K562 (cell line): ENCODE measurements at regions of chrX and their contacts with region 1.

Region 1: GRCh38 chrX:70998411-70999027 is 67.6 kb upstream of the SLC7A3 start:
- DNase-seq: peak in 1 of 4 experiments; percentile 67
- ATAC-seq: peak; percentile 84
- H3K4me3 ChIP-seq: no peak overlapping the region
- H3K27ac ChIP-seq: no peak overlapping the region
- H3K4me1 ChIP-seq: peaks cover 0 to 7% of the 10 kb centered on the region in 2 experiments; a peak in 2 of 5 replicates
- H3K27me3 ChIP-seq: no peaks in the 10 kb centered on the region
- CTCF ChIP-seq: peak; percentile 58 to 63 (median 62)
- EP300 ChIP-seq: no peak
- POLR2A ChIP-seq: no peak
- RAD21 ChIP-seq: peak; percentile 60 to 83

Region 2: DNA sequence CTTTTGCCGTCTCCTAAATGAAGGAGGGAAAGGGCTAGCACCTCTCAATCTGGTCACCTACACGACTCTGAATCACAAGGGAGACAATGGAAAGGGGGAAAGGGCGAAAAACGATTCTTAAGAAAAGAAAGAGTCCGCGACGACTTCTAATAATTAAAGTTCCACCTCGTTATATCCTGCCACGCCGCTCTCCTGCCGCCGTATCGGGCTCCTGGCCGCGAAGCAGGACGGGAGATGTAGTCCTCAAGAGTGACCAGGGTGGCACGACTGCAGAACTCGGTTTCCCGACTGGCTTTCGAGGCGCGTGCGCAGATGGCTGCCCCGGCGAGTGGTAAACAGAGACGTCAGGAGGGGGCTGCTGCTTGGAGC is 97.0 kb after region 1 on chrX and contains the start of gene FOXO4:
- CTCF ChIA-PET with region 1: no interaction called
- POLR2A ChIA-PET with region 1: no interaction called
- in situ Hi-C with region 1: no loop called
- intact Hi-C with region 1: loop called (anchors 1 kb)
- DNase-seq: peak in 2 of 4 experiments; percentile 89 to 93
- ATAC-seq: peak; percentile 90
- H3K4me3 ChIP-seq: peak within 1 kb of the TSS; percentile 59
- H3K27ac ChIP-seq: peak within 1 kb of the TSS; percentile 67
- H3K4me1 ChIP-seq: peaks cover 16 to 24% of the 10 kb centered on the region in 2 experiments; a peak in 4 of 5 replicates
- H3K27me3 ChIP-seq: no peaks in the 10 kb centered on the region
- CTCF ChIP-seq: no peak
- EP300 ChIP-seq: no peak
- POLR2A ChIP-seq: peak; percentile 63
- RAD21 ChIP-seq: no peak
- polyA plus RNA-seq, gene FOXO4: 0.13 to 0.14 TPM

Region 3: DNA sequence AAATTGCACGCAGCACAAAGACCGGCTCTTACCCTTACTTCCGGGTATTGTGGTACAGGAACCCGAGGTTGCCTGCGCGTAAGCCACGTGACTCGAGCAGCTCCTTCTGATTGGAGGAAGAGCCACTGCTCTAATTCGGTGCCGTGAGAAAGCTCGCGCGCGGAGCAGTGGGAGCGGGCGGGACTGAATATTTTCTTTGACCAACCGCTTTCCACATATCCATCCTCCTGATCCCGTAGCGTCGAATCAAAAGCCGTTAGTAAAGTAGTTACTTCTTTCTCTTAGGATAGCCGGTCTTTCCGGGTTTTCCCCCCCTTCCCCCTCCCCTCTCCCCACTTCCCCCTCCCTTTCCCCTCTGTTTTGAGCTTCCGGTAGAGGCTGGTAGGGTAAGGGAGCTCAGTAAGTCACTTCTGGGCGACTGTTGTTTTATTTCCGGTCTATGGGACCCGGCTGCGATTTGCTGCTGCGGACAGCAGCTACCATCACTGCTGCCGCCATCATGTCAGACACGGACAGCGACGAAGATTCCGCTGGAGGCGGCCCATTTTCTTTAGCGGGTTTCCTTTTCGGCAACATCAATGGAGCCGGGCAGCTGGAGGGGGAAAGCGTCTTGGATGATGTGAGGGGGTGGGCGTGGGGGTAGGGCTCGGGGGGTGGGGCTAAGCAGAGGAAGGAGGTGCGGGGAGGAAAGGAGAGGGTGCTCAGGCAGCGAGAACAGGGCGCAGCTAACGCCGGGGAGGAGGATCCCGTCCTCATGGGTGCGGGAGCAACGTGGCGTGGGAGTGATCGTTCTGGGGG is 367.6 kb after region 1 on chrX and contains the start of gene TAF1:
- CTCF ChIA-PET with region 1: no interaction called
- POLR2A ChIA-PET with region 1: no interaction called
- in situ Hi-C with region 1: loop called (anchors 10 kb)
- intact Hi-C with region 1: loop called (anchors 10 kb)
- DNase-seq: peak; percentile 92 to 97 (median 94)
- ATAC-seq: peak; percentile 91
- H3K4me3 ChIP-seq: peak within 1 kb of the TSS; percentile 83
- H3K27ac ChIP-seq: peak within 1 kb of the TSS; percentile 99
- H3K4me1 ChIP-seq: peaks cover 11 to 12% of the 10 kb centered on the region in 2 experiments; a peak in 4 of 5 replicates
- H3K27me3 ChIP-seq: no peaks in the 10 kb centered on the region
- CTCF ChIP-seq: no peak
- EP300 ChIP-seq: peak; percentile 60
- POLR2A ChIP-seq: 0 out of 2 replicates have a peak, but pooled peaks have one; percentile 5
- RAD21 ChIP-seq: no peak
- polyA plus RNA-seq, gene TAF1: 6.4 to 10.5 TPM